Activated CD4-positive, alpha-beta T cell treated with anti-CD3 and anti-CD28 coated beads, Interleukin-2, amount 10 ng/mL, durations not matched to agents 24 days and 14 days (primary cell): ENCODE measurements at regions of chr5 and their contacts with region 1.

Region 1: GRCh38 chr5:122311961-122312590 is at the start of gene SNCAIP:
- DNase-seq: no peak
- H3K4me3 Mint-ChIP-seq: peak within 1 kb of the TSS; percentile 21
- H3K27ac Mint-ChIP-seq: no peak within 1 kb of the TSS
- H3K4me1 Mint-ChIP-seq: peaks cover 2% of the 10 kb centered on the region
- H3K27me3 Mint-ChIP-seq: peaks cover 53% of the 10 kb centered on the region
- total RNA-seq, gene SNCAIP: not detected in 2 replicates

Region 2: GRCh38 chr5:122805481-122805880 is 493.4 kb after region 1 on chr5:
- intact Hi-C with region 1: no loop called
- DNase-seq: no peak
- H3K4me3 Mint-ChIP-seq: no peak overlapping the region
- H3K27ac Mint-ChIP-seq: no peak overlapping the region
- H3K4me1 Mint-ChIP-seq: no peaks in the 10 kb centered on the region
- H3K27me3 Mint-ChIP-seq: no peaks in the 10 kb centered on the region

Region 3: GRCh38 chr5:123099514-123100151 is 787.6 kb after region 1 on chr5:
- intact Hi-C with region 1: loop called (anchors 5 kb)
- DNase-seq: no peak
- H3K4me3 Mint-ChIP-seq: no peak overlapping the region
- H3K27ac Mint-ChIP-seq: no peak overlapping the region
- H3K4me1 Mint-ChIP-seq: peaks cover 2% of the 10 kb centered on the region
- H3K27me3 Mint-ChIP-seq: peaks cover 66% of the 10 kb centered on the region